PC-3 (cell line): ENCODE measurements at regions of chr1 and their contacts with region 1.

Region 1: GRCh38 chr1:34742667-34743270 is 12.1 kb upstream of the GJB5 start:
- DNase-seq: peak; percentile 85
- ATAC-seq: peak; percentile 98
- H3K4me3 ChIP-seq: no peak overlapping the region
- H3K27ac ChIP-seq: no peak overlapping the region
- H3K4me1 ChIP-seq: peaks cover 3% of the 10 kb centered on the region; the same call in 1 of the 2 replicates
- H3K27me3 ChIP-seq: no peaks in the 10 kb centered on the region
- CTCF ChIP-seq: peak; percentile 93

Region 2: GRCh38 chr1:33633019-33633801 is 1109.6 kb before region 1 on chr1:
- CTCF ChIA-PET with region 1: interaction called, 10 read pairs
- POLR2A ChIA-PET with region 1: no interaction called
- intact Hi-C with region 1: loop called (anchors 2 kb)
- DNase-seq: peak; percentile 88
- ATAC-seq: peak; percentile 94
- H3K4me3 ChIP-seq: no peak overlapping the region
- H3K27ac ChIP-seq: no peak overlapping the region
- H3K4me1 ChIP-seq: no peaks in the 10 kb centered on the region
- H3K27me3 ChIP-seq: peaks cover 28% of the 10 kb centered on the region; the same call in 1 of the 2 replicates
- CTCF ChIP-seq: peak; percentile 98

Region 3: DNA sequence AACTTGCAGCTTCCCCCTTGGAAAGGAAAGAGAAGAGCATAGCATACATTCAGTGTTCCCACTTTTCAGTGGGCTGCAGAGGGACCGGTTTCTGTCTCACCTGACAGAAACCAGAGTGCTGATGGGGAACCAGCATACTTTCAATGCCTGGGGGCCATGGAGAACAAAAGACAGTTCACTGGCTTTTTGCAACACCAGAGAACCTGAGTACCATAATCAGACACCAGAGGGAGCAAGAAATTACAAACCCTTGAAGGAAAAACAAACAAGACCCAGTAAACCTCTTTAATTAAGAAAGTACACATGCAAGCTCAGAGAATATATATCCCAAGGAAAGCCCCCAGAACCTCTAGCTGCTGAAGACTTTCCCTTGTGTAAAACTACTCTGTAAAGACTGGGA is 628.9 kb before region 1 on chr1:
- CTCF ChIA-PET with region 1: interaction called, 3 read pairs
- POLR2A ChIA-PET with region 1: no interaction called
- intact Hi-C with region 1: loop called (anchors 5 kb)
- DNase-seq: peak; percentile 45
- ATAC-seq: no peak
- H3K4me3 ChIP-seq: no peak overlapping the region
- H3K27ac ChIP-seq: no peak overlapping the region
- H3K4me1 ChIP-seq: no peaks in the 10 kb centered on the region
- H3K27me3 ChIP-seq: no peaks in the 10 kb centered on the region
- CTCF ChIP-seq: peak; percentile 55; the same call in 1 of the 2 replicates

Region 4: DNA sequence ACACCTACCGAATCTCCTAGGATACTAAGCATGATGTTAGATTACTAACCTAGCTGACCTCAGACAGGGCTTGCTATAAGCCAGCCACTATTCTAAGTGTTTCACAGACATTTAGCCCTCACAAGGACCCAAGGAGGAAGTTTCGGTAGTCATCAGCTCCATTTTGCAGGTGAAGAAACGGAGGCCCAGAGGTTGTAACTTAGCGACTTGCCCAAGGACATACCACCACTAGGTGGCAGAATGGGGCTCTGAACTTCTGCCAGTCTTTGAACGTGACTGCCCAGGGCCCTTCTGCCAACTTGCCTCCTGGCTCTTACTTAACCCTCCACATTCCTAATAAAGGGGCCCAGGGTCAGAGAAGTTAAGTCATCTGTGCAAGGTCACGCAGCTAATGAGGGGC is 282.6 kb before region 1 on chr1:
- CTCF ChIA-PET with region 1: no interaction called
- POLR2A ChIA-PET with region 1: no interaction called
- intact Hi-C with region 1: loop called (anchors 1 kb)
- DNase-seq: peak; percentile 61
- ATAC-seq: no peak; the same call in 1 of the 2 replicates
- H3K4me3 ChIP-seq: no peak overlapping the region
- H3K27ac ChIP-seq: no peak overlapping the region
- H3K4me1 ChIP-seq: no peaks in the 10 kb centered on the region
- H3K27me3 ChIP-seq: 0 out of 2 replicates have a peak, but pooled peaks cover 9% of the 10 kb centered on the region
- CTCF ChIP-seq: peak; percentile 70

Region 5: GRCh38 chr1:34549199-34549598 is 193.6 kb before region 1 on chr1:
- CTCF ChIA-PET with region 1: no interaction called
- POLR2A ChIA-PET with region 1: no interaction called
- intact Hi-C with region 1: loop called (anchors 2 kb)
- DNase-seq: peak; percentile 53
- ATAC-seq: peak; percentile 48; the same call in 1 of the 2 replicates
- H3K4me3 ChIP-seq: no peak overlapping the region
- H3K27ac ChIP-seq: no peak overlapping the region
- H3K4me1 ChIP-seq: no peaks in the 10 kb centered on the region
- H3K27me3 ChIP-seq: no peaks in the 10 kb centered on the region
- CTCF ChIP-seq: peak; percentile 62

Region 6: GRCh38 chr1:34865981-34866761 is 123.4 kb after region 1 on chr1:
- CTCF ChIA-PET with region 1: no interaction called
- POLR2A ChIA-PET with region 1: no interaction called
- intact Hi-C with region 1: no loop called
- DNase-seq: peak; percentile 77
- ATAC-seq: peak; percentile 75
- H3K4me3 ChIP-seq: peak overlapping the region; percentile 72
- H3K27ac ChIP-seq: no peak overlapping the region
- H3K4me1 ChIP-seq: peaks cover 3% of the 10 kb centered on the region; the same call in 1 of the 2 replicates
- H3K27me3 ChIP-seq: peaks cover 3% of the 10 kb centered on the region
- CTCF ChIP-seq: peak; percentile 95